A549 (cell line): ENCODE measurements at regions of chr16 and their contacts with region 1.

Region 1: DNA sequence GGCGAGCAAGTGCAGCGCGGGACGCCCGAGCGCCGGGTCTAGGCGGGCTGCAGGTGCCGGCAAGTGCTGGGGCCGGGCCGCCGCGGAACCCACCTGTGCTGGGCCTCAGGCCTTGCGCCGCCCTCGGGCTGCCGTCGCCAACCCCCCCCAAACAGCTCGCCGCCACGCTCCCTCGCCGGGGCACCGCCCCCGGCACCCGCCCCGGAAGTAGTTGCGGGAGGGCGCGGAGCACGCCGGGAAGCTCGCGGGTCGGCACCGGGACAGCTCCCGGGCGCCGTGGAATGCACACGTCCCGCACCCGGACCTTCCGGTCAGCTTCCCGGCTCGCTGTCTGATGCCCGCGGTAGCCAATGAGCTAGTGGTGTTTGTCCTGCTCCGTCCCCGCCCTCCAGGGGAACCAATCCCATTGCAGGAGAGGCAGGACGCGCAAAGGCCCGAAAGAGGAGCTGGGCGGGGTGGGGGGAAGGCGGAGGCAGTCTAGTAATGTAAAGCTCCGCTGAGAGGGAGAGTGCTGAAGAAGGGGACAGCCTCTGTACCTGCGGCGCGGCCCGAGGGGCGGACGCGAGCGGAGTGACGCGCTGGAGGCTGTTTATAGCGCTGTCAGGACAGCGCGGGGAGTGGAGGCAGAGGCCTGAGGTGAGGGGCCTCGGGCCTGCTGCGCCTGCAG is at the starts of genes ANKS3 and DNAAF8:
- DNase-seq: peak; percentile 97 to 99
- ATAC-seq: peak; percentile 97 to 98
- H3K4me3 ChIP-seq: peak within 1 kb of the TSS; percentile 92
- H3K27ac ChIP-seq: peak within 1 kb of the TSS; percentile 81 to 94
- H3K4me1 ChIP-seq: peaks cover 8% of the 10 kb centered on the region; the same call in 1 of the 3 replicates
- CTCF ChIP-seq: no peak
- EP300 ChIP-seq: no peak
- POLR2A ChIP-seq: peak; percentile 63
- RAD21 ChIP-seq: no peak
- polyA plus RNA-seq, gene ANKS3: 19.8 and 22.7 TPM in 2 replicates
- polyA plus RNA-seq, gene DNAAF8: 1.6 and 1.7 TPM in 2 replicates

Region 2: DNA sequence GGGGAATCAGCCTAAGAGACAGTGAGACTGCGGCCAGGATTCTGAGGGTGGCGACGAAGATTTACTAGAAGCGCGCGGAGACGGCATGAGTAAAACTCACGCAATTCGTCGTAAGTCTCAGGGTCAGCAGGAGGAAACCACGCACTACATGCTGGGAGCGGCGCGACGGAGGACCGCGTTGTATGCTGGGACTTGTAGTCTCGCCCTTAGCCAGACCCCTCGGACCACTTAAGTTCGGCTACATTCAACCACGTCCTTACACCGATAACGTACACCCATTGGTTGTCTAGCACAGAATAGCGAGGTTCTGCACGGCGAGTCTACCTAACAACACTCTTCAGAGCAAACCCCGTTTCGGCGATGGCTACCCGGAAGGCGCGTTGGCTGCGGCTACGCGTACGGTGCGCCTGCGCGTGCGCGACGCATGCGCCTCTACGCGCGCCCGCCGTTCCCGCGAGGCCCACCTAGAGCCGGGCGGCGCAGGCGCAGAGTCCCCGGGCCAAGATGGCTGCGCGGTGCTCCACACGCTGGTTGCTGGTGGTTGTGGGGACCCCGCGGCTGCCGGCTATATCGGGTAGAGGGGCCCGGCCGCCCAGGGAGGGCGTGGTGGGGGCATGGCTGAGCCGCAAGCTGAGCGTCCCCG is 308.7 kb before region 1 on chr16 and contains the start of gene DNAJA3:
- CTCF ChIA-PET with region 1: no interaction called
- POLR2A ChIA-PET with region 1: no interaction called
- DNase-seq: peak; percentile 95 to 98
- ATAC-seq: peak; percentile 96
- H3K4me3 ChIP-seq: peak within 1 kb of the TSS; percentile 84
- H3K27ac ChIP-seq: peak within 1 kb of the TSS; percentile 95 to 96
- H3K4me1 ChIP-seq: peaks cover 18% of the 10 kb centered on the region
- CTCF ChIP-seq: no peak
- EP300 ChIP-seq: no peak
- POLR2A ChIP-seq: peak; percentile 88
- RAD21 ChIP-seq: no peak
- polyA plus RNA-seq, gene DNAJA3: 70.9 and 77.2 TPM in 2 replicates

Region 3: GRCh38 chr16:4766874-4767628 is 32.9 kb after region 1 on chr16 and contains the start of gene ZNF500:
- CTCF ChIA-PET with region 1: no interaction called
- POLR2A ChIA-PET with region 1: interaction called, 25 read pairs
- DNase-seq: peak; percentile 96 to 97
- ATAC-seq: peak; percentile 86 to 94
- H3K4me3 ChIP-seq: peak within 1 kb of the TSS; percentile 81
- H3K27ac ChIP-seq: peak within 1 kb of the TSS; percentile 84 to 98
- H3K4me1 ChIP-seq: peaks cover 17% of the 10 kb centered on the region; the same call in 2 of the 3 replicates
- CTCF ChIP-seq: no peak
- EP300 ChIP-seq: no peak
- POLR2A ChIP-seq: peak; percentile 75
- RAD21 ChIP-seq: no peak
- polyA plus RNA-seq, gene ZNF500: 4.6 and 4.7 TPM in 2 replicates

Region 4: DNA sequence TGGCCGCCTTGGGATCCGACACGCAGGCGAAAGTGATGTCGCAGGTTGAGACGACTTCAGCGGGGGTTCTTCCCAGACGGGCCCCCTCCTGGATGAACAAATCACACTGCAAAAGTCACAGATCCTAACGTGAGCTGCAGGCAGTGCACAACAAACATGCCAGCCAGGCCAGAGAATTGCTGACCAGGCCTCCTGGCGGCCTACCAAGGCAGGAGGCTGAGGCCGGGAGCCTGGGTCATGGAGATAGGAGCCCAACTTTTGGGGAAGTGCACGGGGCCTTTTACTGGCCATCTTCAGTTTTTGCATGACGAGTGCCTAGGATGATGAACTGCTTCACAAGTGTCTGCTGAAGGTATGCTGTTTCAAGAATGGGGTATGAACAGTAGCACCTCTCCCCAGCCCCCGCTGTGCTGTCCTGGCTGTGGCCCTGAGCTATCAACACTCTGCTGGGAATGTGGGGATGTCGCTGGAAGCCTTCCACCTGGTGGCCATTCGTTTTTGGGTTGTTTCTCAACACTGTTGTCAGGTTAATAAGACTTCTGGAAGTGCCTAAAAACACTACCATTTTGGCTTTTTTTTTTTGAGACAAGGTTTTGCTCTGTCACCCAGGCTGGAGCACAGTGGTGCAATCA is 80.5 kb after region 1 on chr16:
- CTCF ChIA-PET with region 1: no interaction called
- POLR2A ChIA-PET with region 1: no interaction called
- DNase-seq: no peak
- ATAC-seq: peak; percentile 38 to 51; a peak in 2 of 6 replicates
- H3K4me3 ChIP-seq: no peak overlapping the region
- H3K27ac ChIP-seq: no peak overlapping the region
- H3K4me1 ChIP-seq: no peaks in the 10 kb centered on the region
- CTCF ChIP-seq: no peak
- EP300 ChIP-seq: no peak
- POLR2A ChIP-seq: no peak
- RAD21 ChIP-seq: no peak